PC-9 (cell line): ENCODE measurements at regions of chrX and their contacts with region 1.

Region 1: DNA sequence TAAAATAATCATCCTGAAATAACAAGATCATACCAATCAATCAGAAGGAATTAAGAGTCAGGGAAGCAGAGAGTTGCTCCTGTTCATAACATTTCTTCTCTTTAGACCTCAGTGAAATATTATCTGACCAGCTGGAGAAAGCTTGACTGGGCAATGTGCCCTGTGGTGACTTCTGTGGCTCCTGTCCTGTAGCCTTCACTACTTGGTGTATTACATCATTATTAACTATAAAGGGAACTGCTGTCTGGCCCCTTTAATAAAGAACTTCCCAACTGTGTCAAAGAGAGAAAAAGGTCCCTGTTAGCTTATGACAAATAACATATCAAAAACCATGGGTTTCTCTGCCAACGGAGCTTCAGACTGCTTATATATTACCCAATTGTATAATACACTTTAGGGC is 18.0 kb downstream of the OPHN1 start:
- DNase-seq: peak; percentile 31 to 58
- H3K4me3 ChIP-seq: no peak overlapping the region
- H3K27ac ChIP-seq: peak overlapping the region; percentile 78
- H3K4me1 ChIP-seq: peaks cover 62% of the 10 kb centered on the region
- H3K27me3 ChIP-seq: no peaks in the 10 kb centered on the region
- CTCF ChIP-seq: no peak

Region 2: DNA sequence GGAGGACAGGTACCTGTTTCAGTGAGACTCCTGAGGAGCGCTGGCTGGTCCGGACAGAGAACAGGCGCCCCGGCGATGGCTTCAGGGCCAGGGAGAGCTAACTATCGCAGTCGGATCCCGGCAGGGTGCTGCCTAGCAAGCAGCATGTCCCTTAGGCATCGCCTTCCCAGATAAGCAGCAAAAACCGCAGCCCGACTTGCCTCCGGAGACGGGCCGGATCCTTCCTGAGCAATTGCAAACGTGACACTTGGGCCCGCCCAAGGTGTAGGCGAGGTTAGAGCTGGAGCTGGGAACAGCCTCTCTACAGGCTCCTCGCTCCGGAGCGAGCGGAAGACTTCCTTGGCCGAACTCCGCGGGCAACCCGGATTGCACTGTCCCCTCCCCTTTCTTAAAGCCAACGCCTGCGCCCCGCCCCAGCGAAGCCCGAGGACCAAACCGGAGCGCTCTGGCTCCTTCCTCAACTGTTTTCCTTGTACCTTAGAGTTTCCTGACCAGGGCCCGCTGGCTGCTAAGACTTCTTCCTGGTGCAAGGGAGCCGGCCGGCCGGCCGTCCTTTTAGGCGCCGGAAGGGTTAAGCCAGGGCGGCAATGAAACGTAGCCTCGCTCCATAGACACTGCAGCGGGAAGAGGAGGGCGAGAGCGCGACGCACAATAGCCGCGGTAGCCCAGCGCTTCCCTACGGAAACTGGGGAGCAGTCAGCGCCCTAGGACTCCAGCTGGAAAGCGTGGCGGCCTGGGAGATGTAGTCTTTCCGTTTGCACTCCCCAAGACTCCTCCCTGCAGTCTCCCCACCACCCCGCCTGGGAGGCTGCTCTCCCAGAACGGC is 18.1 kb after region 1 on chrX and contains the start of gene OPHN1:
- CTCF ChIA-PET with region 1: interaction called, 5 read pairs
- POLR2A ChIA-PET with region 1: interaction called, 5 read pairs
- intact Hi-C with region 1: loop called (anchors 1 kb)
- DNase-seq: peak; percentile 80 to 83
- H3K4me3 ChIP-seq: peak within 1 kb of the TSS; percentile 61
- H3K27ac ChIP-seq: peak within 1 kb of the TSS; percentile 58
- H3K4me1 ChIP-seq: peaks cover 38% of the 10 kb centered on the region
- H3K27me3 ChIP-seq: no peaks in the 10 kb centered on the region
- CTCF ChIP-seq: no peak
- total RNA-seq, gene OPHN1: 9.3 and 11.6 TPM in 2 replicates

Region 3: GRCh38 chrX:68480969-68481368 is 65.7 kb after region 1 on chrX:
- CTCF ChIA-PET with region 1: no interaction called
- POLR2A ChIA-PET with region 1: no interaction called
- intact Hi-C with region 1: loop called (anchors 5 kb)
- DNase-seq: peak in 1 of 2 experiments; percentile 35
- H3K4me3 ChIP-seq: no peak overlapping the region
- H3K27ac ChIP-seq: no peak overlapping the region
- H3K4me1 ChIP-seq: peaks cover 10% of the 10 kb centered on the region
- H3K27me3 ChIP-seq: no peaks in the 10 kb centered on the region
- CTCF ChIP-seq: no peak

Region 4: DNA sequence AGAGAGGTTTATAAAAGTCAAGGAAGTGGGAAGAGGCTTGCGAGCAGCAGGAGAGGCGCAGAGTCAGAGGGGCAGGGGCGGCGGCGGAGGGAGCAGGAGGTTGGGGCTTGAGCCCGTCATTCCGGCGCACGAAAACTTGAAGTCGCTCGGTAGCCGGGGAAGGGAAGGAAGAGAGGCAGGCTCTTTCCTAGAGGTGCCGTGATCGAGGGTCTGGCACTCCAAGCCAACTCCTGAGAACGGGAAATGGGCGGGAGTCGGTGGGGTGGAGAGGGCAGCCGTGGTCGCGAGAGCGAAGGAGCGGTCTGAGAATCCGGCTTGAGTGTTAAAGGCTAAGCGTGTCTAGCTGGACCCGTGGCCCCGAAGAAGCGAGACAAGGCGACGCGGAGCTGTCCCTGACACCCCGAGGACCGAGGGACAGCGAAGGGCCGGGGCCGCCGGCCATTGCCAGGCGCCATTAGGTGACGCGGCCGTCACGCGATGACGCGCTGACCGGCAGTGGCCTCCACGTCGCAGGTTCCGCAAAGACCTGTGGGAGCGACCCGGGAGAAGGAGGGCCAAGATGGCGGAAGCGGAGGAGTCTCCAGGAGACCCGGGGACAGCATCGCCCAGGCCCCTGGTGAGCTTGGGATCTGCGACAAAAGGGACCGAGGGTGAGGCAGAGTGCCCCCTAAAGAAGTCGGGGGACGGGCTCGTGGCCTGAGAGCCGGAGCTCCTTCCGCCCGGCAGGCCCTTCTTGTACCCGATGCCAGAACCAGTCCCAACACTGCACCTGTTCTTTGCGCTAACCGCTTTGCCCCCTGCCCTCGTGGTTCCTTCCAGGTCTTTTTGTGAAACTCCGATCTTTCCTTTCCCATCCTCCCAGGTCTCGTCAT is 83.4 kb after region 1 on chrX and contains the start of gene YIPF6:
- CTCF ChIA-PET with region 1: no interaction called
- POLR2A ChIA-PET with region 1: no interaction called
- intact Hi-C with region 1: loop called (anchors 5 kb)
- DNase-seq: peak; percentile 61 to 69
- H3K4me3 ChIP-seq: peak within 1 kb of the TSS; percentile 98
- H3K27ac ChIP-seq: peak within 1 kb of the TSS; percentile 87
- H3K4me1 ChIP-seq: peaks cover 15% of the 10 kb centered on the region; the same call in 1 of the 2 replicates
- H3K27me3 ChIP-seq: no peaks in the 10 kb centered on the region
- CTCF ChIP-seq: no peak; the same call in 1 of the 2 replicates
- total RNA-seq, gene YIPF6: 46.1 and 49.1 TPM in 2 replicates